Activated CD8-positive, alpha-beta memory T cell treated with anti-CD3 and anti-CD28 coated beads, Interleukin-2, amount 10 ng/mL, durations not matched to agents 7 days and 5 days (primary cell): ENCODE measurements at regions of chr15 and their contacts with region 1.

Region 1: GRCh38 chr15:71743861-71744382 is 66.4 kb upstream of the NR2E3 start:
- DNase-seq: peak; percentile 67
- ATAC-seq: no peak
- H3K4me3 Mint-ChIP-seq: no peak overlapping the region
- H3K27ac Mint-ChIP-seq: no peak overlapping the region
- H3K4me1 Mint-ChIP-seq: peaks cover 7% of the 10 kb centered on the region
- H3K27me3 Mint-ChIP-seq: peaks cover 34% of the 10 kb centered on the region

Region 2: GRCh38 chr15:72155635-72156616 is 412.0 kb after region 1 on chr15:
- CTCF ChIA-PET with region 1: interaction called, 44 read pairs
- DNase-seq: peak; percentile 89
- ATAC-seq: peak; percentile 95
- H3K4me3 Mint-ChIP-seq: peak overlapping the region; percentile 65
- H3K27ac Mint-ChIP-seq: no peak overlapping the region
- H3K4me1 Mint-ChIP-seq: peaks cover 4% of the 10 kb centered on the region
- H3K27me3 Mint-ChIP-seq: no peaks in the 10 kb centered on the region

Region 3: GRCh38 chr15:72168111-72168808 is 424.3 kb after region 1 on chr15:
- CTCF ChIA-PET with region 1: interaction called, 11 read pairs
- DNase-seq: peak; percentile 75
- ATAC-seq: peak; percentile 86
- H3K4me3 Mint-ChIP-seq: no peak overlapping the region
- H3K27ac Mint-ChIP-seq: peak overlapping the region; percentile 45
- H3K4me1 Mint-ChIP-seq: peaks cover 26% of the 10 kb centered on the region
- H3K27me3 Mint-ChIP-seq: peaks cover 2% of the 10 kb centered on the region